GM10248 (cell line): ENCODE measurements at regions of chr5 and their contacts with region 1.

Region 1: DNA sequence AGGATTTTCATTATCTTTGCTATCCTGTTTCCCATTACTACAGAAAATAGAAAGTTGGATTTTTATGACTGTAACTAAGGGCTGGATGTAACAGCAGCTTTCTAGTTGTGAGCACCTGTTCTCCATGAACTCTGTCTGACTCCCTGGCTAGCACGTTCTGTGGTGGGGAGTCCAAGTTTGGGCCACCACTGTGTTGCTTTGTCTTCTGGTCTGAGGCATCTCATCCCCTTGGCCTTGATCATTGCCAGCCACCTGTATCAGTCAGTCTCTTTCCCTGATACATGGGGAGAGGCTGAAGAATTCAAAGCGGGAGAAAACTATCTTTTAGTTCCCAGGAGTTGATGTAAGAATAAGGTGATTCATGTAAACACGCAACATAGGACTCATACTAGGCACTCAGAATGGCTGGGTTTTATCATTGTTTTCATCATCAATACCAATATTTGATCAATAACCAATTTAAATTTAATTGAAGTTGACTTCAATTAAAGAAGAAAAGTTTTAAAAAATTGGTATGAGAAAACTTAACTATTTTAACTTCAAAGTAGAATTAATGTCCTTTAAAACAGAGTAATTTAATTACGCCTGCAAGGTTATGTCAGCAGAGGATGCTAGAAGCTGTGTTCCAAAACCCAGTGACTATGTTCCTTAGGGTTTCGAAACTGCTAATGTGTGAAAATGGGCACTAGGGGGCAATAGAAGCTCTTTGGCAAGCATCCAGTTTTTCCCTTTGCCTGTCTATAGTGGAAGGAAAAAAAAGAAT is 33.6 kb downstream of the WDR70 start:
- DNase-seq: peak; percentile 68
- CTCF ChIP-seq: peak; percentile 61

Region 2: GRCh38 chr5:36982146-36982545 is 430.6 kb before region 1 on chr5:
- CTCF ChIA-PET with region 1: no interaction called
- POLR2A ChIA-PET with region 1: no interaction called
- DNase-seq: no peak
- CTCF ChIP-seq: no peak

Region 3: DNA sequence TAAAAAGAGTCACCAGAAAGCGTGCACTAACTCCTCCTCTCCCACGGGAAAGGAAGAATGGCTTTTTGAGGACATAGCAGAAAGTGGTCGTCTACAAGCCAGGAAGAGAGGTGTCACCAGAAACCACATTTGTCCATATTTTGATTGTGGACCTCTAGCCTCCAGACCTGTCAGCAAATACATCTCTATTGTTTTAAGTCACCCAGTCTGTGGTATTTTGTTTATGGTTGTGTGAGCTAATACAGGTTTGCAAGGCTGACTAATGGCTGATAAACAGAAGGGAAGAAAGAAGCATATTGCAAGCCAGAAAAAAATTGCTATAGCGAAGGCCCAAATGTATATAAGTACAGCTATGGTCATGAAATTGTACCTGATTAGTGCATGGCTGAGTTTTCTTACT is 12.2 kb before region 1 on chr5:
- CTCF ChIA-PET with region 1: interaction called, 32 read pairs
- POLR2A ChIA-PET with region 1: no interaction called
- DNase-seq: no peak
- CTCF ChIP-seq: no peak

Region 4: GRCh38 chr5:37575541-37576489 is 163.1 kb after region 1 on chr5:
- CTCF ChIA-PET with region 1: no interaction called
- POLR2A ChIA-PET with region 1: no interaction called
- DNase-seq: no peak
- CTCF ChIP-seq: no peak